G401 (cell line): ENCODE measurements at regions of chr17 and their contacts with region 1.

Region 1: GRCh38 chr17:32659419-32659842 is 172.6 kb downstream of the CDK5R1 start:
- DNase-seq: peak; percentile 86

Region 2: DNA sequence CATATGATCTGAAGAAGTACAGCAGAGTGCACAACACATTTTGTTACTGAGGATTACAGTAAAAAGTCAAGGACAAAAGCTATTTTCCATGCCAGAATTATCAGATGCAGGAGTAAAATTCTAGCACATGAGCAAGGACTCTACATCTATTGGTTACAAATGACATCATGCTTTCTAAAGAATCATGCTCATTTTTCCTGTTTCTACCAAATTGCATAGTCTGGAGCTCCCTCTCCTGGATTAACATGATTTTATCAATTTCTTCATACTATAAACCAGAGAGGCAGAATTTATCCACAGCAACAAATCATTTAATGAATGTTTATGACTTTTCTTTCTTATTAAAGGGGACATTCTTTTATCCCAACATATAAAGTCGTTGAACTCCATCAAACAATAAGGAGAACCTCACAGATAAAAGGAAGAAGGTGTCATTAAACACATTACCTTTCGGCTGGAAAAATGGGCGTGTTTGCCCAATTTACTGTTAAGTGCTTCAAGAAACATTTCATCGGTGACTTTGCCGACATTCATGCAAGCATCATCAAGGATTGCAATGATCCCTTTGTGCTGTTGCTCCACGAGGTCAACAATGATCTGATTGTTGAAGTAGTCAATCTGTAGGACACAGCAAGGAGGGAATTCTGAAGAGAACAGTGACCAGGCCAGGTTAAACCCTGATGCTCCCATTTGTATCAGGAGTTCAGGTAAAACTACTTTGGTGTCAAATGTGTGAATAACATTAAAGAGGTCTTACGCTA is 95.8 kb after region 1 on chr17:
- in situ Hi-C with region 1: loop called (anchors 25 kb)
- DNase-seq: peak; percentile 85

Region 3: DNA sequence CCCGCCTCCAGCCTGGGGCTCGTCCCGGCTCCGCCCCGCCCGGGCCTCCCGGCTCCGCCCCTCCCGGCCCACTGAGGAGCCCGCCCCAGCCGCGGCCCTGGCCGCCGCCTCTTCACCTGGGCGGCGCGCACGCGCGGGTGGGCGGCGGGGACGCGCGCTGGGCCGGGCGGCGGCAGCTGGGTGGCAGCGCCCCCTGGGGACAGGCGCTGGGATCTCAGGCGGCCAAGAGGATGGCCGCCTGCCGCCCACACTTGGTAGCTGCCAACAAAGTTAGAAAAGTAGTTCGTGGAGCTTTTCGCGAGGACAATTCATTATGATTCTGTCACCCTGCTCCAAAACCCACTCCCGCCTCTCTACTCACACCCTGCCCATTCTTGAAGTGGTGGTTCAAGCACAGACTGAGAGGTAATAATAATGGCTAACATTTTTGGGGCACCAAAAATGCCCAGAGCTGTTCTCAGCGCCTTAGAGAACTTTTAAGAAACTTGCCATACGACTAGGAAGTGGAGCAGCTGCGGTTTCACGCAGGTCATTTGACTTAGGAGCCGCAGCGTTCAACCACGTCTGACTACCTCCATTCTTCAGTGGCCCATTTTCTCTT is 217.8 kb after region 1 on chr17:
- in situ Hi-C with region 1: no loop called
- DNase-seq: peak; percentile 89